Endothelial cell of umbilical vein (primary cell): ENCODE measurements at regions of chr2 and their contacts with region 1.

Region 1: GRCh38 chr2:64488050-64488974 is 34.4 kb downstream of the LGALSL start:
- DNase-seq: peak; percentile 55
- H3K4me3 ChIP-seq: no peak overlapping the region
- H3K27ac ChIP-seq: no peak overlapping the region
- H3K4me1 ChIP-seq: peaks cover 31% of the 10 kb centered on the region
- H3K27me3 ChIP-seq: peaks cover 10 to 19% of the 10 kb centered on the region in 2 experiments
- CTCF ChIP-seq: peak; percentile 87 to 92
- POLR2A ChIP-seq: no peak

Region 2: GRCh38 chr2:64052468-64053241 is 435.7 kb before region 1 on chr2:
- CTCF ChIA-PET with region 1: interaction called, 17 read pairs
- POLR2A ChIA-PET with region 1: no interaction called
- dilution Hi-C with region 1: no loop called
- intact Hi-C with region 1: loop called (anchors 1 kb)
- DNase-seq: peak; percentile 94
- H3K4me3 ChIP-seq: peak overlapping the region in 1 of 3 experiments; percentile 20
- H3K27ac ChIP-seq: peak overlapping the region; percentile 96
- H3K4me1 ChIP-seq: peaks cover 28% of the 10 kb centered on the region
- H3K27me3 ChIP-seq: no peaks in the 10 kb centered on the region
- CTCF ChIP-seq: no peak
- POLR2A ChIP-seq: no peak

Region 3: GRCh38 chr2:64359892-64360657 is 128.2 kb before region 1 on chr2:
- CTCF ChIA-PET with region 1: interaction called, 18 read pairs
- POLR2A ChIA-PET with region 1: no interaction called
- dilution Hi-C with region 1: no loop called
- intact Hi-C with region 1: no loop called
- DNase-seq: peak; percentile 80
- H3K4me3 ChIP-seq: no peak overlapping the region
- H3K27ac ChIP-seq: no peak overlapping the region
- H3K4me1 ChIP-seq: peaks cover 3% of the 10 kb centered on the region
- H3K27me3 ChIP-seq: peaks cover 6 to 22% of the 10 kb centered on the region in 2 experiments
- CTCF ChIP-seq: no peak
- POLR2A ChIP-seq: no peak

Region 4: GRCh38 chr2:64439194-64439593 is 49.1 kb before region 1 on chr2:
- CTCF ChIA-PET with region 1: interaction called, 11 read pairs
- POLR2A ChIA-PET with region 1: no interaction called
- dilution Hi-C with region 1: no loop called
- intact Hi-C with region 1: no loop called
- DNase-seq: no peak
- H3K4me3 ChIP-seq: no peak overlapping the region
- H3K27ac ChIP-seq: no peak overlapping the region
- H3K4me1 ChIP-seq: no peaks in the 10 kb centered on the region
- H3K27me3 ChIP-seq: peaks cover 19 to 24% of the 10 kb centered on the region in 2 experiments
- CTCF ChIP-seq: no peak
- POLR2A ChIP-seq: no peak

Region 5: GRCh38 chr2:64467096-64467843 is 21.0 kb before region 1 on chr2:
- CTCF ChIA-PET with region 1: interaction called, 34 read pairs
- POLR2A ChIA-PET with region 1: no interaction called
- dilution Hi-C with region 1: no loop called
- intact Hi-C with region 1: no loop called
- DNase-seq: no peak
- H3K4me3 ChIP-seq: no peak overlapping the region
- H3K27ac ChIP-seq: no peak overlapping the region
- H3K4me1 ChIP-seq: no peaks in the 10 kb centered on the region
- H3K27me3 ChIP-seq: peaks cover 0 to 8% of the 10 kb centered on the region in 2 experiments
- CTCF ChIP-seq: no peak
- POLR2A ChIP-seq: no peak

Region 6: GRCh38 chr2:64501946-64502345 is 13.6 kb after region 1 on chr2:
- CTCF ChIA-PET with region 1: interaction called, 32 read pairs
- POLR2A ChIA-PET with region 1: no interaction called
- dilution Hi-C with region 1: no loop called
- intact Hi-C with region 1: no loop called
- DNase-seq: no peak
- H3K4me3 ChIP-seq: no peak overlapping the region
- H3K27ac ChIP-seq: no peak overlapping the region
- H3K4me1 ChIP-seq: no peaks in the 10 kb centered on the region
- H3K27me3 ChIP-seq: peaks cover 24 to 37% of the 10 kb centered on the region in 2 experiments
- CTCF ChIP-seq: no peak
- POLR2A ChIP-seq: no peak

Region 7: DNA sequence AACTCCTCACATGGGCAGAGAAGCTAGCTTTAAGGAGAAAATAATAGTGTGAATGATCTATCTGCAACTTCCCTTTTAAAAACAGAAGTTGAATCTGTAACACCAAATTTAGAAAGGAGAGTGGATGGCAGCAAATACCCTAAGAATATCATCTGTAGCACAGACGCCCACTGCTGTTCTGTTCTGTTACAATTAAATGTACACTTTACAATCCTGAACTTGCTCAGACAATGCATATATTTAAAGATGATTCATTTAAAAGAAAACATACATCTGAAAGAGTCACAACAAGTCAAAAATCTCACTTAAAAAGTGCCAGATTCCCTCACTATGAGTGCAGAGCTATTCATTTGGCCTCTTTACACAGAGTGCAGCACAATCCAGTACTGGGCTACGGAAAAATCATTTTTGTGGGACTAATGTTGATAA is 173.4 kb after region 1 on chr2:
- CTCF ChIA-PET with region 1: no interaction called
- POLR2A ChIA-PET with region 1: no interaction called
- dilution Hi-C with region 1: no loop called
- intact Hi-C with region 1: no loop called
- DNase-seq: peak; percentile 14
- H3K4me3 ChIP-seq: no peak overlapping the region
- H3K27ac ChIP-seq: no peak overlapping the region
- H3K4me1 ChIP-seq: no peaks in the 10 kb centered on the region
- H3K27me3 ChIP-seq: no peaks in the 10 kb centered on the region
- CTCF ChIP-seq: no peak
- POLR2A ChIP-seq: no peak